ENCODE measurements at regions of chr11 and their contacts with region 1.

Region 1: GRCh38 chr11:118338637-118339061 is 3.9 kb downstream of the CD3D start:
- DNase-seq: peak; percentile 88
- H3K4me3 Mint-ChIP-seq: peak overlapping the region; percentile 86
- H3K27ac Mint-ChIP-seq: peak overlapping the region; percentile 100
- H3K4me1 Mint-ChIP-seq: peaks cover 56% of the 10 kb centered on the region
- H3K27me3 Mint-ChIP-seq: no peaks in the 10 kb centered on the region

Region 2: DNA sequence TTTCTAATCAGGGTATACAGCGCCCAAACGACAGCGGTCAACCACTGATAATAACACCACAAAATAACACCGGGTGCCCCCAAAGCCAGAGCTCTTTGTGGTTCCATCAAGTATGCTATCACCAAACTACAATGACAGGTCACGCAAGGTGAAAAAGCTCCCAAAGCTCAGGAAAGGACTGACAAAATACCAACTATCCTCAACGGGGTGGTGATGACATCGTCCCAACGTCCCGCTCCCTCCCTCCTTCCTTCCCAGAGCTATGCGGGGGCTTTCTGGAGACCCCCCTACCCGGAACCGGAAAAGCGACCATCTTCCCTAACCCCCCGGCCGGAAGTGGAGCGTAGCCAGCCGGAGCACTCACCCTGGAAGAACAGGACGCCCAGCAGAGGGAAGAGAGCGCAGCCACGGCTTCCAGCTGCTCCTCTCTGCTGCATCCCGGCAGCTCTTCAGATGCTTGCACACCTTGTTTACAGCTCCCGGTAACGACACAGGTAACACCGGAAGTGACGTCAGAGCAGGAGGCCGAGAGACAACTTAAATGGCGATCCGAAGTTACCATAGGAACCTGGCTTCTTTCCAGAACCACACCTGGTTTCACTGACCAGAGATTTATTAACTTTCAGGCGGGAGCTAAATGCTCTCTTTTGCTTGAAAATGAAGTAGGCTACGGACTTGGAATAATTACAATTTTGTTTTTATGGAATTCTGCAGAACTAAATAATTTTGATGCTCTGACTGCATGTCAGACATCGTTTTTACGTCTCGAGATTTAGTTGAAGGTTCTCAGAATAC is 86.6 kb before region 1 on chr11 and contains the start of gene MPZL3:
- intact Hi-C with region 1: loop called (anchors 5 kb)
- DNase-seq: peak; percentile 73
- H3K4me3 Mint-ChIP-seq: peak within 1 kb of the TSS; percentile 90
- H3K27ac Mint-ChIP-seq: peak within 1 kb of the TSS; percentile 97
- H3K4me1 Mint-ChIP-seq: peaks cover 38% of the 10 kb centered on the region
- H3K27me3 Mint-ChIP-seq: no peaks in the 10 kb centered on the region
- total RNA-seq, gene MPZL3: 49.5 and 49.7 TPM in 2 replicates

Region 3: DNA sequence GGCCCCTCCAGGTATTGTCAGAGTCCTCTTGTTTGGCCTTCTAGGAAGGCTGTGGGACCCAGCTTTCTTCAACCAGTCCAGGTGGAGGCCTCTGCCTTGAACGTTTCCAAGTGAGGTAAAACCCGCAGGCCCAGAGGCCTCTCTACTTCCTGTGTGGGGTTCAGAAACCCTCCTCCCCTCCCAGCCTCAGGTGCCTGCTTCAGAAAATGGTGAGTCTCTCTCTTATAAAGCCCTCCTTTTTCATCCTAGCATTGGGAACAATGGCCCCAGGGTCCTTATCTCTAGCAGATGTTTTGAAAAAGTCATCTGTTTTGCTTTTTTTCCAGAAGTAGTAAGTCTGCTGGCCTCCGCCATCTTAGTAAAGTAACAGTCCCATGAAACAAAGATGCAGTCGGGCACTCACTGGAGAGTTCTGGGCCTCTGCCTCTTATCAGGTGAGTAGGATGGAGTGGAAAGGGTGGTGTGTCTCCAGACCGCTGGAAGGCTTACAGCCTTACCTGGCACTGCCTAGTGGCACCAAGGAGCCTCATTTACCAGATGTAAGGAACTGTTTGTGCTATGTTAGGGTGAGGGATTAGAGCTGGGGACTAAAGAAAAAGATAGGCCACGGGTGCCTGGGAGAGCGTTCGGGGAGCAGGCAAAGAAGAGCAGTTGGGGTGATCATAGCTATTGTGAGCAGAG is 33.9 kb before region 1 on chr11 and contains the start of gene CD3E:
- intact Hi-C with region 1: loop called (anchors 1 kb)
- DNase-seq: peak; percentile 64
- H3K4me3 Mint-ChIP-seq: peak within 1 kb of the TSS; percentile 89
- H3K27ac Mint-ChIP-seq: peak within 1 kb of the TSS; percentile 100
- H3K4me1 Mint-ChIP-seq: peaks cover 47% of the 10 kb centered on the region
- H3K27me3 Mint-ChIP-seq: no peaks in the 10 kb centered on the region
- total RNA-seq, gene CD3E: 518 and 529 TPM in 2 replicates

Region 4: GRCh38 chr11:118359295-118359958 is 20.8 kb after region 1 on chr11 and contains the start of gene UBE4A:
- intact Hi-C with region 1: loop called (anchors 1 kb)
- DNase-seq: peak; percentile 96
- H3K4me3 Mint-ChIP-seq: peak within 1 kb of the TSS; percentile 92
- H3K27ac Mint-ChIP-seq: peak within 1 kb of the TSS; percentile 84
- H3K4me1 Mint-ChIP-seq: peaks cover 33% of the 10 kb centered on the region
- H3K27me3 Mint-ChIP-seq: no peaks in the 10 kb centered on the region
- total RNA-seq, gene UBE4A: 41.2 and 44.1 TPM in 2 replicates

Region 5: DNA sequence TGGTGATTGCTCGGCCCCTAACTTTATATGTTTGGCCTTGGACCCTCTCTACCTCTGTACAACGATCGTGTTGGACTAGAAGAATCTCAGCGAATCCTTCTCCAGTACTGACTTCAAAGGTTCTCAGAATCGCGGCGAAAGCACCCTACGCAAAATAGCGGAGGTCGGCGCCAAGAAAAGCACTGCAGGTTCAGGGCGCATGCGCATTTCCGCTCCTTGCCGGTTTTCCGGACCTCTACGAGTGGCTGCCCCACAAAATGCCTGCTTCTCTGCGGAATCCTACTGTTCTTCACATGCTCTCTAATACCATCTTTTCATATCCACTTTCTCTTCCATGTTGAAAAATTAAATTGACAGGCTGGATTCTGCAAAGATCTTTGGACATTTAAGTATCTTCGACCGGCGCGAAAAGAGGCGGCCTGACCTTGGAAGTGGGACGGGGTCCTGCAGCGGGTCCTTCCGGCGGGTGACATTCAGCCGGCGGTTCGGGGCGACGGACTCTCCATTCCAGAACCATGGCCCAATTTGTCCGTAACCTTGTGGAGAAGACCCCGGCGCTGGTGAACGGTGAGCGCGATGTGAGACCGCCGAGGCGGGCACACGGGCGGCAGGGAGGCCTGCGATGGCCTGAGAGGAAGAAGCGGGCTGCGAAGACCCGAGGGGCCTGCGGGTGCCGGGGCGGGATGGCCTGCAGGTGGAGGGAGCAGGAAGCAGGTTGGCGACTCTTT is 62.7 kb after region 1 on chr11 and contains the start of gene ATP5MG:
- intact Hi-C with region 1: no loop called
- DNase-seq: peak; percentile 88
- H3K4me3 Mint-ChIP-seq: peak within 1 kb of the TSS; percentile 99
- H3K27ac Mint-ChIP-seq: peak within 1 kb of the TSS; percentile 99
- H3K4me1 Mint-ChIP-seq: peaks cover 60% of the 10 kb centered on the region
- H3K27me3 Mint-ChIP-seq: no peaks in the 10 kb centered on the region
- total RNA-seq, gene ATP5MG: 237 and 266 TPM in 2 replicates

Region 6: DNA sequence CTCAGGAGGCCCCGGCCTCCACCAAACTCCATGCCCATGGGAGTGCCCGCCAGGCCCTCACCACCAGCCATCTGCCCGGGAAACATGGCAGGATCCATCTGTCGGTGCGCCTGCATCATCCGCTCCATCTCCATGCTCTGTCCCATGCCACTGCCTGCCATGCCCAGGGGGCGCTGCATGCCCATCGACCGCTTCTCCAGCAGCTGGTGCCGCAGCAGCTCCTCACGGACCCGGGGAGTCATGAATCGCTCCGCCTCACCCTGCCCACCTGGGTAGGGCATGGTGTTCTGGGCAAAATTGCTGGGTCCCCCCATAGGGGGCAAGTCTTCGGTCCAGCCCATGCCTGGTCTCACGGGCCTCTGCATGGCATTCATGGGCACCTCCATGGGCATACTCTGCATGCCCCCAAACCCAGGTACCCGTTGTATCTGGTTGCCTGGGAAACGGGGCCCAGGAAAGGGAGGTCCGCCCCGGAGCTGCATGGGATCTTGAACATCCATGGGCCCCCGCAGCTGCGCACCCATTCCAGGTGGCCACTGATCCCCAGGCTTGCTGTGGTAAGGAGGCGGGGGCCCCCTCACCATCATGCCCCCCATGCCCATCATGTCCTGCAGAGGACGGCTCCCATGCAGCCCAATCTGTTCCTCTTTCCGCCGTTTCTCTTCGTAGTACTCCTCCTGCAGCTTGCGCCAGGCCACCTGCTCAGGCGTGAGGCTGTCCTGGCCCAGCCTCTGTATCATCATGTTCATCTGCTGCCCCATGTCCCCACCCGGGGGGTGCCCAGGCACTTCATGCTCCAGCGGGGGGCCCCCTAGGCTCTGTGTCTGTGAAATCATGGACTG is 563.1 kb after region 1 on chr11:
- intact Hi-C with region 1: no loop called
- DNase-seq: no peak
- H3K4me3 Mint-ChIP-seq: no peak overlapping the region
- H3K27ac Mint-ChIP-seq: no peak overlapping the region
- H3K4me1 Mint-ChIP-seq: peaks cover 5% of the 10 kb centered on the region
- H3K27me3 Mint-ChIP-seq: no peaks in the 10 kb centered on the region